ENCODE measurements at regions of chr14 and their contacts with region 1.

Region 1: DNA sequence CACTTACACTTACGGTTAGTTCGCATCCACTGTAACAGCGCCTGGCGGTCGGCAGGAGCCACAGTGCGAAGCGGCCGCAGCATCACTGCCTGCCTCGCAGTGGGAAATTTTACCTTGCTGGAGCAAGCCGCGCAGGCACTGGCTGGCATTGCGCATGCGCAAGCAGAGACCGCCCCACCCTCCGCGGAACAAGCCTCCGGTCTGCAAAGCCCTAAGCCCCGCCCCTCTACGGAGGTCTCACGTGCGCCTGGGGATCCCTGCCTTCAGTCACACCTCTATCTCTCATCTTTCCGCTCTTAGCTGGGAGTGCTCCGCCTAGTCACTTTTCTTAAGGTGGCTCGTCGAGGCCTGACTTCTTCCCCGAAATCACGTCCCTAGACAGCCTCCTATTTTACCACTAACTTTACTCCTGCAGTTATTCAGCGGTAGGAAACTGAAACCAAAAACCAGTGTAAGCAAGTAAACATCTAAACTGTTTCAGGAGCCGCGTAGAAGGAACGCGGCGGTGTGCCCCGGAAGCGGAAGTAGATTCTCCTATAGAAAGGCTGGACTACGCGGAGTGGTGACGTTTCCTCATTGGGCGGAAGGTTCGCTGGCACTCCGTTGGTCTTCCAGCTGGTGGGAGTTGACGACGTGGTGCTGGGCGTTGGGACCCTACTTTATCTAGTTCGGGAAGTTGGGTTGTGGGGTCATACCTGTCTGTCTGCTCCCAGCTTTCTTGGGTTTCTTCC is at the start of gene SRP54:
- DNase-seq: peak; percentile 100
- ATAC-seq: peak; percentile 92
- H3K4me3 Mint-ChIP-seq: no peak within 1 kb of the TSS
- H3K27ac Mint-ChIP-seq: no peak within 1 kb of the TSS
- H3K4me1 Mint-ChIP-seq: peaks cover 10% of the 10 kb centered on the region
- H3K27me3 Mint-ChIP-seq: no peaks in the 10 kb centered on the region
- CTCF ChIP-seq: no peak
- total RNA-seq, gene SRP54: 79.6 to 79.8 TPM

Region 2: GRCh38 chr14:34875031-34875922 is 107.3 kb before region 1 on chr14 and contains the start of gene BAZ1A:
- CTCF ChIA-PET with region 1: interaction called, 9 read pairs
- POLR2A ChIA-PET with region 1: interaction called, 73 read pairs
- intact Hi-C with region 1: loop called (anchors 1 kb)
- DNase-seq: peak; percentile 40
- ATAC-seq: no peak
- H3K4me3 Mint-ChIP-seq: peak within 1 kb of the TSS; percentile 100
- H3K27ac Mint-ChIP-seq: peak within 1 kb of the TSS; percentile 100
- H3K4me1 Mint-ChIP-seq: peaks cover 29% of the 10 kb centered on the region
- H3K27me3 Mint-ChIP-seq: no peaks in the 10 kb centered on the region
- CTCF ChIP-seq: no peak
- total RNA-seq, gene BAZ1A: 47.4 to 49.4 TPM

Region 3: DNA sequence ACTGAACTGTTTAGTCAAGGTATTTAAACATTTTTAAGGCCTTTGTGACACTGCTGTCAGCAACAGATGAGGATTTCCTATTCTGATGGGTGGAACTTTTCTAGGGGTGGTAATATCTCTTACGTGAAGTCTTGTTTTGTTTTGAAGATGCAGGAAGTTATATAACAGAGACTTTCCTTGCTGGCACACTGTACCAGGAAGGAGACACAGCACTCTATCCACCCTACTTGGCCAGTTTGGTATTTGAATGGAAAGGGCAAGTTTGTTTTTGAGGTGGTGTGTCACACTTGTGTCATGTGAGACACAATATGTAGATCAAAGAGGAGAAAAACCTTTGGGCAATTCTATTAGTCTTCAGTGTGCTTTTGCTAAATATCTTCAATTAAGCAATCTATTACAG is 51.4 kb before region 1 on chr14:
- CTCF ChIA-PET with region 1: interaction called, 11 read pairs
- POLR2A ChIA-PET with region 1: interaction called, 21 read pairs
- intact Hi-C with region 1: loop called (anchors 5 kb)
- DNase-seq: peak; percentile 48
- ATAC-seq: peak; percentile 79
- H3K4me3 Mint-ChIP-seq: peak overlapping the region; percentile 60
- H3K27ac Mint-ChIP-seq: peak overlapping the region; percentile 97
- H3K4me1 Mint-ChIP-seq: peaks cover 40% of the 10 kb centered on the region
- H3K27me3 Mint-ChIP-seq: no peaks in the 10 kb centered on the region
- CTCF ChIP-seq: no peak

Region 4: GRCh38 chr14:34966413-34966812 is 16.2 kb before region 1 on chr14:
- CTCF ChIA-PET with region 1: interaction called, 18 read pairs
- POLR2A ChIA-PET with region 1: interaction called, 5 read pairs
- intact Hi-C with region 1: no loop called
- DNase-seq: peak; percentile 18
- ATAC-seq: peak; percentile 98
- H3K4me3 Mint-ChIP-seq: no peak overlapping the region
- H3K27ac Mint-ChIP-seq: peak overlapping the region; percentile 73
- H3K4me1 Mint-ChIP-seq: peaks cover 21% of the 10 kb centered on the region
- H3K27me3 Mint-ChIP-seq: no peaks in the 10 kb centered on the region
- CTCF ChIP-seq: no peak

Region 5: DNA sequence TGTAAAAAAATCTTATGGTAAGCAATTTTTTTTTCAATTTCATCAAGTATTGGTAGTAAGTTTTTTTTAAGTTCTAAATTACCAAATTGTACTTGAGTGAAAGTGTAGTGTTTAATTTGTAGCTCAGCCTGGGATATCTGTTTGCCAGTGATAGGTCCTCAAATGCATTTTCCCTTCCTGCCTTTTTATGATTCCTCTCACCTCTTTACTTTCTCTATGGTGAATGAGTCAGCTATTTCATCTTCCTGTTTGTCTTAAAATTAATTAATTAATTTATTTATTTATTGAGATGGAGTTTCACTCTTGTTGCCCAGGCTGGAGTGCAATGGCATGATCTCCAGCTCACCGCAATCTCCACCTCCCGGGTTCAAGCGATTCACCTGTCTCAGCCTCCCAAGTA is 10.8 kb after region 1 on chr14:
- CTCF ChIA-PET with region 1: interaction called, 3 read pairs
- POLR2A ChIA-PET with region 1: interaction called, 13 read pairs
- intact Hi-C with region 1: no loop called
- DNase-seq: no peak
- ATAC-seq: no peak
- H3K4me3 Mint-ChIP-seq: no peak overlapping the region
- H3K27ac Mint-ChIP-seq: no peak overlapping the region
- H3K4me1 Mint-ChIP-seq: peaks cover 37% of the 10 kb centered on the region
- H3K27me3 Mint-ChIP-seq: no peaks in the 10 kb centered on the region
- CTCF ChIP-seq: no peak

Region 6: GRCh38 chr14:35046048-35046741 is 63.6 kb after region 1 on chr14 and contains the start of gene FAM177A1:
- CTCF ChIA-PET with region 1: interaction called, 5 read pairs
- POLR2A ChIA-PET with region 1: interaction called, 19 read pairs
- intact Hi-C with region 1: loop called (anchors 5 kb)
- DNase-seq: peak; percentile 100
- ATAC-seq: peak; percentile 95
- H3K4me3 Mint-ChIP-seq: peak within 1 kb of the TSS; percentile 83
- H3K27ac Mint-ChIP-seq: peak within 1 kb of the TSS; percentile 97
- H3K4me1 Mint-ChIP-seq: peaks cover 25% of the 10 kb centered on the region
- H3K27me3 Mint-ChIP-seq: no peaks in the 10 kb centered on the region
- CTCF ChIP-seq: no peak
- total RNA-seq, gene FAM177A1: 28.0 to 35.8 TPM

Region 7: DNA sequence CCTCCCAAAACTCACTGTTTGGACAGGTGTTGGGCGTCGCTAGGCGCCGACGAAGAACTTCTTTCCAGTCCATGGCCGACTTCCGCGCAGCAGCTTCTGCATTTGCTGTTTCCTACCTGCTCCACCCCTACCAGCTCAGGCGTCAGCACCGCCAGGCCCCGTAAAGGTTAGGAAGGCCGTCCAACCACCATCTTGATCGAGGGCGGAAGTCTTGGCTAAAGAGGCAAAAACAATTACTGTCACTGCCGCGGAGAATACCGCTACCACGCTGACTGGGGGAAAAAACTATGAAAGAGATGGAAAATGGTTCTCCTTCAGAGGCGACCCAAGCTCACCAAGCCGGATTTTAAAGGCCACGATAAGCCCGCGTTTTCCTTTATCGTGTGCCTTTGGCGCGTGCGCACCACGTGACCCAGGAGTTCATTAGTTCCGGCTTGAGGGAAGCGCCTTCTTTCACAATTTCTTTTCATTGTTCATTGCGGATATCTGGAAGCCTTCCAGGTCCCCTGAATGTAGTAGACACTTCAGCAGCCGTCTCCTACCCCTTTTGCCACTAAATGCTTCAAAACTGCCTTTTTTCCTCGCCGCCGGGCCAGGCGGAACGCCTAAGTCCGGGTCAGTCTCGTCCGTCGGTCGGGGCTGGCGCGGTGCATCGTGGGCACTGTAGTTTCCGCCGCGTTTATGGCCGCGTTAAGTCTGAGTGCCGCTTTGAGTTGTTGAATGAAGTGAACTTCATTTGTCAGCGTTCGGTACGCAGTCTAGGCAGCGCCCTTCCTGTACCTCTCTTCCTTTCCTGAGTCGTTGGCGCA is 139.5 kb after region 1 on chr14 and contains the starts of genes PPP2R3C and PRORP:
- CTCF ChIA-PET with region 1: no interaction called
- POLR2A ChIA-PET with region 1: no interaction called
- intact Hi-C with region 1: loop called (anchors 2 kb)
- DNase-seq: peak; percentile 94
- ATAC-seq: peak; percentile 86
- H3K4me3 Mint-ChIP-seq: peak within 1 kb of the TSS; percentile 84
- H3K27ac Mint-ChIP-seq: peak within 1 kb of the TSS; percentile 99
- H3K4me1 Mint-ChIP-seq: peaks cover 58% of the 10 kb centered on the region
- H3K27me3 Mint-ChIP-seq: no peaks in the 10 kb centered on the region
- CTCF ChIP-seq: no peak
- total RNA-seq, gene PPP2R3C: 38.2 to 40.7 TPM
- total RNA-seq, gene PRORP: 30.6 to 34.4 TPM